ENCODE measurements at regions of chr11 and their contacts with region 1.

Region 1: DNA sequence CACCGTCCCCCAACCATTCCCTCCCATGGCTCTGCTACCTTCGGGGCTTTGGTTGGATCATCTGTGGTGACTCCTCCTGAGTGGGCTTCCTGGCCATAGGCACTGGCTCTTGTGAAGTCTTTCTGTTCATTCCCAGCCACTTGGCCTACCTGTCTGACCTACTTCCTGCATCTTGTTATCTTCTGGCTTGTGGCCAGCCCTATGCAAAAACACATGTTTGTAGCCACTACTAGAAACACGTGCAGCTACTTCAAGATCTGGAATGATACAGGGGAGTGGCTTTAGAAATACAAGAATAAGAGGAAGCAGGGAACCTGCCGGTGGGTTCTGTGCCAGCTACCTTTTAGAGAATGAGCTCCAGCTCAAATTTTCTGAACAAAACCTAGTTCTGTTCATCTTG is 20.9 kb downstream of the RCOR2 start:
- DNase-seq: no peak
- H3K4me3 ChIP-seq: no peak overlapping the region
- H3K27me3 ChIP-seq: no peaks in the 10 kb centered on the region
- CTCF ChIP-seq: no peak

Region 2: DNA sequence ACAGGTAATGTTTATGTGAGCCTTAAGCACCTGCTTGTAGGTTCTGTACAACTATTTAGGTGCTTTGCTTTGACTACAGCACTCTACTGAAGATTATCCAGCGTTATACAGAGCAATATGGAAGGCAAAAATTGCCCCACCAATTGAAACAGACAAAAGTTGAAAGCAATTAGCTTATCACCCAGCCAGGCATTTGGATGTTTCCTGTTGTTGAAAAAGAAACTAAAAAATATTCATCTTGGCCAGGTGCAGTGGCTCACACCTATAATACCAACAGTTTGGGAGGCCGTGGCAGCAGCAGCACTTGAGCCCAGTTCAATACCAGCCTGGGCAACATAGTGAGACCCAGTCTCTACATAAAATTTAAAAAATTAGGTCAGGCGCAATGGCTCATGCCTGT is 243.4 kb before region 1 on chr11:
- CTCF ChIA-PET with region 1: no interaction called
- POLR2A ChIA-PET with region 1: no interaction called
- DNase-seq: no peak
- H3K4me3 ChIP-seq: no peak overlapping the region
- H3K27me3 ChIP-seq: no peaks in the 10 kb centered on the region
- CTCF ChIP-seq: no peak

Region 3: GRCh38 chr11:63729326-63729725 is 166.7 kb before region 1 on chr11:
- CTCF ChIA-PET with region 1: no interaction called
- POLR2A ChIA-PET with region 1: no interaction called
- DNase-seq: no peak
- H3K4me3 ChIP-seq: no peak overlapping the region
- H3K27me3 ChIP-seq: no peaks in the 10 kb centered on the region
- CTCF ChIP-seq: no peak

Region 4: DNA sequence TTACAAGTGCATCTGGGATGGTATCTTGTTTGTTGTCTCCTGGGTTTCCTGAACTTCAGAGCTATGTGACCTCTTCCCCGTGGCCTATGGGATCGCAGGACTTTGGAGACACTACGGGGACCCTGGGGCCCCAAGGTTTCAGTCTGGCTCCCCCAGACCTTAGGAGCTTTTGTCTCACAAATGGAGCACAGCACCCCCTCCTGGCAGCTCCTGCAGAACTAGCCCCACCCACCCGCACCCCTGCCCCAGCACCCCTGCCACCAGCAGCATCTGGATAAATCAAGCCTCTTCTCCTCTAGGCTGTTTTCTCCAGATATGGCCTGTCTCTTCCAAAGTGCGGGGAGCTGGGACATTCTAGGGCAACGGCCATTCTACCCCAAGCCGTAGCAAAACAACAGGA is 10.5 kb after region 1 on chr11:
- CTCF ChIA-PET with region 1: interaction called, 11 read pairs
- POLR2A ChIA-PET with region 1: no interaction called
- DNase-seq: no peak
- H3K4me3 ChIP-seq: no peak overlapping the region
- H3K27me3 ChIP-seq: no peaks in the 10 kb centered on the region
- CTCF ChIP-seq: peak; percentile 40; the same call in 1 of the 2 replicates

Region 5: DNA sequence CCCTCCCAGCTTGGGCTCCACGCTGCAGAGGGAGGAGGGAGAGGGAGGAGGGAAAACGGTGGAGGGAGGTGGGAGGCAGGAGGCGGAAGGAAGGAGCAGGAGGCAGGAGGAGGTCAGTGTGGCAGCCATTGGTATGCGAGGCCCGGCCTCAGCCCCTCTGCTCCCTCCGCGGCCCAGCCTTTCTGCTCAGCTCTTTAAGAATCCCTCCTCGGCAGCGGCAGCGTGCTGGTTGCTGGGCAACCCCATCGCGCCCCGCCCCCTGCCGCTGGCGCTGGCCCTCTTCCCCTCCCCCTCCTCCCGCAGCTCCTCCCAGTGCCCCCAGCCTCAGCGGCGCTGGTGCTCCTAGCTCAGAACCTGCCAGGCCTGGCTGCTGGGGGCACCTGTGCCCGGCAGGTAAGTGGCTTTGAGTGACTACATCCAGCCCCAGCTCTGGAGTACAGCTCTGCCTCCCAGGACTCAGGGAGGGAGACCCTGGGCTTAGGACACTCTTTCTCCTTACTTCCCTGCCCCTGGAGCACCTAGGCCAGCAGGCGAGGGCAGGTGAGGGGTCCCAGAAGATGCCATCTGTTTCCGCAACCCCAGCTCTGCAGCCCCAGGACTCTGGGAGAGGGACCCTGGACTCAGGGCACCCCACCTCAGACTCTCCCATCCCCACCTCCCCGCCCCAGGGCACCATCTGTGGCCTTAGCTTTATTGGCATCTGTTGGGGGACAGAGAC is 132.5 kb after region 1 on chr11:
- CTCF ChIA-PET with region 1: no interaction called
- POLR2A ChIA-PET with region 1: no interaction called
- DNase-seq: no peak
- H3K4me3 ChIP-seq: no peak overlapping the region
- H3K27me3 ChIP-seq: peaks cover 8% of the 10 kb centered on the region; the same call in 1 of the 2 replicates
- CTCF ChIP-seq: no peak